GM10248 (cell line): ENCODE measurements at regions of chr3 and their contacts with region 1.

Region 1: DNA sequence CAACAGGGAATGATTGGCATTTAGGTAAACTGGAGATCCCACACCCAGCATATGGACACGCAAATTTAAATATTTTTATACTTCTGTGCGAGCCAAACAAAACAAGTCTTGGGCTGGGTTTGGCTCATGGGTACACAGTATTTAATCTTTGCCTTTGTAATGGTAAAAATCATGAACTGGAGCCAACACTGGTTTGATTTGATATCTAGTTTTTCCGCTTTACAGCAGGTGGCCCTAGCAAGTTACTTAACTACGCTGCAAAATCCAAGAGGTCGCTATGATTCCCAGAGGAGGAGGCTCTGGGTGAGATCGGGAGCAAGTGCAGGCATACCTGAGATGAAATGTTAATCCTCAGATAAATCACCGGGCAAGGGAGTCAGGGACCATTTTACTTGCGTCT is 207.9 kb upstream of the SATB1 start:
- DNase-seq: no peak
- CTCF ChIP-seq: no peak

Region 2: GRCh38 chr3:18401300-18401961 is 231.6 kb before region 1 on chr3:
- CTCF ChIA-PET with region 1: no interaction called
- POLR2A ChIA-PET with region 1: no interaction called
- DNase-seq: no peak
- CTCF ChIP-seq: no peak

Region 3: GRCh38 chr3:18645619-18646018 is 12.6 kb after region 1 on chr3:
- CTCF ChIA-PET with region 1: interaction called, 10 read pairs
- POLR2A ChIA-PET with region 1: no interaction called
- DNase-seq: no peak
- CTCF ChIP-seq: no peak

Region 4: GRCh38 chr3:18791752-18792151 is 158.7 kb after region 1 on chr3:
- CTCF ChIA-PET with region 1: no interaction called
- POLR2A ChIA-PET with region 1: no interaction called
- DNase-seq: no peak
- CTCF ChIP-seq: no peak